Right cardiac atrium (tissue), 5 donors: ENCODE measurements at regions of chr1 and their contacts with region 1.

Region 1: DNA sequence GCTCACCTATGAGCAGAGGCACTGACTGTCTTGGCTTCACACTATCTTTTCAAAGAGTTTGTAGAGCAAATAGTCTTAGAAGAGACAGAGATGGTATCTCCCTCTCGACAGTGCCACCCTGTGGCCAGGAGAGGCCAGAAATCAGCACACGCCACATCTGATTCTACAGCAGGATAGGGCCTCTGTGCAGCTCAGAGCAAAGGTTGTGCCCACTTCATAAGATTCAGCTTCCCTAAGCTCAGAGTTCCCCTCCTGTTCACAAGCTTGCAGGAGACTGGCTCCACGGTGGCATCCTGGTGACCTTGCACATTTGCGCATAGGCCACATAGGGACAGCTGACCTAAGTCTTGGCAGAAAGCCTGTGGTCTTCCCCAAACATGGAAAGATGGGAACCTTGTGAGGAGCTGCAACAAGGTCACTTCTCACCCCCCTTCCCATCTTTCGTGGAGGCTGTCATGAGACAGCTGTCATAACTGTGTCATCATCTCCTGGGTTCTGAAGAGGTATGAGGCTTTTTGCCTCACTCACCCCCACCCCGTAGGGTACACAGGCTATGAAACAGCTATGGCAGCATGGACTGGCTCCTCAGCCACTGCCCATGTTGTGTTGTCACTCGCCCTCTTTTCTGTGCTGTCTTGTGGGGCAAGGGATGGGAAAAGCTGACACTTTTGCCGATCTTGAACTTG is 3.0 kb downstream of the ITLN2 start:
- DNase-seq: peak; percentile 64 to 92 (median 85)
- ATAC-seq: peak; percentile 72 to 83
- H3K4me3 ChIP-seq: no peak overlapping the region
- H3K27ac ChIP-seq: no peak overlapping the region
- H3K4me1 ChIP-seq: peaks cover 8% of the 10 kb centered on the region
- H3K27me3 ChIP-seq: no peaks in the 10 kb centered on the region

Region 2: DNA sequence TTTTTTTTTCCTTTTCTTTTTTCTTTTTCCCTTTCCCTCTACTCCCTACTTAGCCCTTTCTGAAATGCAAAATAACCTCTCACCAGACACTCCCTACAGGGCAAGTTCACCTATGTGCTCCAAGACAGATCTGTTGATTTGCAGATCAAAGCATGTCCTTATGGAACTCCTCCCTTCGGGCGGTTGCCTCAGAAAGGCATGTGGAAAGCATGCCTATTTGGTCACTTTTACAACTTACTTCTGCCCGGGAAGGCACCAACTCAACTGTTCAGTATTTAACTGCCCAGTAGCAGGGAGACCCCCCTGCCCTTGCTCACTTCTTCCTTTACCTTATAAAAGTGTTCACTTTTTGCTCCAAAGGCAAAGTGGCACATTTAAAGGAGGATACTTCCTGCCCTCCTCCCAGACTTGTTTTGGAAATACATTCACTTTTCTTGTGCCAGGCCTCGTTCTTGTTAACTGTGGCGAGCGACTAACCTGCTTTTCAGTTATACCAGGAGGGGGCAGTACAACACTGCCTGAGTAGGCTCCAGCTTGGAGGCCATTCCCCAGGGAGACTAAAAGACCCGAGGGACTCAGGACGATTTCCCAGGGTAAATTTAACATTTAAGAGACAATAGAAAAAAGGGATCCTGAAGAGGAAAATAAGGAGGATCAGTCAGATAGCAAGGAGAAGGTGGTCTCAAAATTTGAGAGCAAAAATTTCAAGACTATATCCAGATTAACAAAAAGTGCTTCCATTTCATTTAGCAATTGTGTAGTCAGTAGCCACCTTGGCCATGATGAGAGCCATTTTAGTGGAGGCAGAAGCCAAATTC is 224.9 kb before region 1 on chr1:
- intact Hi-C with region 1: loop called in 2 of 4 experiments (anchors 5 to 10 kb)
- DNase-seq: peak in 2 of 3 donors; percentile 23 to 52
- ATAC-seq: peak; percentile 88 to 92
- H3K4me3 ChIP-seq: no peak overlapping the region
- H3K27ac ChIP-seq: no peak overlapping the region
- H3K4me1 ChIP-seq: no peaks in the 10 kb centered on the region
- H3K27me3 ChIP-seq: no peaks in the 10 kb centered on the region

Region 3: DNA sequence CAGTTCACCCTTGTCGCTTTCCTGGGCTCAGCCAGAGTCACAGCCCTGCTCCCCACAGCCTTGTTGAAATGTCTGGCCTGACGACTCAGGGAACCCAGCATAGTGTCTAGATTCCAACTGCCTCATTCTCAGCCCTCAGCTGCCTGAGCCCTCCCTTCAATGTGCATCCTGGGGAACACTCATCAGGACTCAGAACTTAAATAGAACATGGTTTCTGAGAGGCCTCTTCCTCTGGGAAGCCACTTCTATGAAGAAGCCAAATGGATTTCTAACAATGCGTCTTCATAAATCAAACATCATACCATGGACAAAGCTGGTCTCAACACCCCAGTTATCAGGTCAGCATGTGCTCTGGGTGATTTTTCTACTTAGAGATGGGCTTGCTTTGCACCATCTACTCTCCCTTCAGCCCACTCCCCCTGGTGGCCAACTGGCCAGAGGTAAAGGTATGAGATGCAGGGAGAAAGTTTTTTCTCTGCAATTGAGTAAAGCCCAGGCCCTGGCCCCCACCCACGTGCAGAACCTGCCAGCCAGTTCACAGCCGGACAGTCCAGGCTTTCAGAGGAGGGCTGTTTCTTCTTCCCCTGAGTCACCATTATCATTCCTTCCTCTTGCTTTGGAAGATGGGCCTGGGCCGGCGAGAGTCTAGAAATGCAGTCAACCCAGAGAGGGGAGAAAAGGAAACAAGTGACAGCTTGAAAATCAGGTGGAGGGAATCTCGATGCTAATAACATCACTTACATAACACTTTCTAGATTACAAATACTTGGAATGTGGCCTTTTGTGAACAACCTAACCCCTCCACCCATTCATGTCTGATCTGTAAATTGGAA is 121.0 kb before region 1 on chr1:
- intact Hi-C with region 1: loop called (anchors 5 to 10 kb)
- DNase-seq: peak; percentile 51 to 86 (median 73)
- ATAC-seq: peak; percentile 38 to 67
- H3K4me3 ChIP-seq: no peak overlapping the region
- H3K27ac ChIP-seq: no peak overlapping the region
- H3K4me1 ChIP-seq: no peaks in the 10 kb centered on the region
- H3K27me3 ChIP-seq: no peaks in the 10 kb centered on the region

Region 4: GRCh38 chr1:160837558-160838205 is 113.9 kb before region 1 on chr1:
- intact Hi-C with region 1: loop called (anchors 5 to 10 kb)
- DNase-seq: peak; percentile 14 to 83 (median 67)
- ATAC-seq: peak; percentile 48 to 62
- H3K4me3 ChIP-seq: no peak overlapping the region
- H3K27ac ChIP-seq: no peak overlapping the region
- H3K4me1 ChIP-seq: peaks cover 4% of the 10 kb centered on the region
- H3K27me3 ChIP-seq: no peaks in the 10 kb centered on the region